Transverse colon (tissue), 4 donors: ENCODE measurements at regions of chr16 and their contacts with region 1.

Region 1: GRCh38 chr16:22321339-22322001 is 24.3 kb downstream of the POLR3E start:
- DNase-seq: peak; percentile 76
- H3K4me3 ChIP-seq: no peak overlapping the region
- H3K27ac ChIP-seq: no peak overlapping the region
- H3K4me1 ChIP-seq: peaks cover 0 to 3% (median 0%) of the 10 kb centered on the region in 4 donors
- H3K27me3 ChIP-seq: no peaks in the 10 kb centered on the region
- CTCF ChIP-seq: peak; percentile 90 to 95 (median 92)
- EP300 ChIP-seq: no peak
- POLR2A ChIP-seq: no peak

Region 2: GRCh38 chr16:22353191-22353919 is 31.9 kb after region 1 on chr16:
- in situ Hi-C with region 1: no loop called
- intact Hi-C with region 1: no loop called
- DNase-seq: peak; percentile 32
- H3K4me3 ChIP-seq: no peak overlapping the region
- H3K27ac ChIP-seq: peak overlapping the region; percentile 68 to 74 (median 69)
- H3K4me1 ChIP-seq: peaks cover 15 to 41% (median 20%) of the 10 kb centered on the region in 4 donors
- H3K27me3 ChIP-seq: no peaks in the 10 kb centered on the region
- CTCF ChIP-seq: no peak
- EP300 ChIP-seq: no peak
- POLR2A ChIP-seq: no peak

Region 3: DNA sequence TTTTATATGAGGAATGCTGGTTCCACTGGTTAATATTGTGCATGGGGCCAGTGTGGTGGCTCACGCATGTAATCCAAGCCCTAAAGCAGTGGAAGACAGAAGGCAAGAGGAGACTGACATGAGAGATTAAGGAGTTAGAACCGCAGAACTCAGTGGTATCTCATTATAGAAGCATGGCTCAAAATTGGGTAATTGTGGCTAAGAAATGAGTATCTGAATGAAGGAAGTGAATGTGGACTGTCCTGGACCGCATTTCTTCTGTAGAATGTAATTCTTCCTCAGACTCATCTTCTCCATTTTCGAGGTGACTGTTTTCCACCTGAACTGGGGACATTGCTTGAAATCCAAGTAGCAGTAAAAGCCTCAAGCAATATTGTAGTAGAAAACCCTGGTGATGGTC is 95.5 kb after region 1 on chr16:
- in situ Hi-C with region 1: loop called in 2 of 4 experiments (anchors 10 to 25 kb)
- intact Hi-C with region 1: no loop called
- DNase-seq: no peak
- H3K4me3 ChIP-seq: no peak overlapping the region
- H3K27ac ChIP-seq: no peak overlapping the region
- H3K4me1 ChIP-seq: no peaks in the 10 kb centered on the region
- H3K27me3 ChIP-seq: no peaks in the 10 kb centered on the region
- CTCF ChIP-seq: no peak
- EP300 ChIP-seq: no peak
- POLR2A ChIP-seq: no peak

Region 4: DNA sequence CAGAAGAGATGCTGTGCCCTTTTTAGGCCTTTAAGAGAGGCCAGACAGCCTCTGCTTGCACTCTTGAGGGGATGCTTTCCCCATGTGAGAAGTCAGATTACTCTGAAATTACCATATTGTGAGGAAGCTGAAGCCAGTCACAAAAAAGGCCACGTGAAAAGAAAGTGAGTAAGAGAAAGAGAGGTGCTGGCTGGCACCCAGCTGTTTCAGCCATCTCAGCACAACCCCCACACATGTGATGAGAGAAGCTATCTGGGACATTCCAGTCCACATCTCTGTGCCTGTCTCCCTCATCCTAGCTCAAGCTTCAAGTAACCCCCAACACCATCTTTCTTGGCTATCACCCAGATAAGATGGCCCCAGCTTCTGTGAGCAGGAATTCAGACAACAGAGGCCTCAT is 623.9 kb after region 1 on chr16:
- in situ Hi-C with region 1: no loop called
- intact Hi-C with region 1: no loop called
- DNase-seq: no peak
- H3K4me3 ChIP-seq: no peak overlapping the region
- H3K27ac ChIP-seq: no peak overlapping the region
- H3K4me1 ChIP-seq: peaks cover 5 to 8% (median 7%) of the 10 kb centered on the region in 4 donors
- H3K27me3 ChIP-seq: peaks cover 42% of the 10 kb centered on the region
- CTCF ChIP-seq: no peak
- EP300 ChIP-seq: no peak
- POLR2A ChIP-seq: no peak